ENCODE measurements at regions of chr7 and their contacts with region 1.

Region 1: DNA sequence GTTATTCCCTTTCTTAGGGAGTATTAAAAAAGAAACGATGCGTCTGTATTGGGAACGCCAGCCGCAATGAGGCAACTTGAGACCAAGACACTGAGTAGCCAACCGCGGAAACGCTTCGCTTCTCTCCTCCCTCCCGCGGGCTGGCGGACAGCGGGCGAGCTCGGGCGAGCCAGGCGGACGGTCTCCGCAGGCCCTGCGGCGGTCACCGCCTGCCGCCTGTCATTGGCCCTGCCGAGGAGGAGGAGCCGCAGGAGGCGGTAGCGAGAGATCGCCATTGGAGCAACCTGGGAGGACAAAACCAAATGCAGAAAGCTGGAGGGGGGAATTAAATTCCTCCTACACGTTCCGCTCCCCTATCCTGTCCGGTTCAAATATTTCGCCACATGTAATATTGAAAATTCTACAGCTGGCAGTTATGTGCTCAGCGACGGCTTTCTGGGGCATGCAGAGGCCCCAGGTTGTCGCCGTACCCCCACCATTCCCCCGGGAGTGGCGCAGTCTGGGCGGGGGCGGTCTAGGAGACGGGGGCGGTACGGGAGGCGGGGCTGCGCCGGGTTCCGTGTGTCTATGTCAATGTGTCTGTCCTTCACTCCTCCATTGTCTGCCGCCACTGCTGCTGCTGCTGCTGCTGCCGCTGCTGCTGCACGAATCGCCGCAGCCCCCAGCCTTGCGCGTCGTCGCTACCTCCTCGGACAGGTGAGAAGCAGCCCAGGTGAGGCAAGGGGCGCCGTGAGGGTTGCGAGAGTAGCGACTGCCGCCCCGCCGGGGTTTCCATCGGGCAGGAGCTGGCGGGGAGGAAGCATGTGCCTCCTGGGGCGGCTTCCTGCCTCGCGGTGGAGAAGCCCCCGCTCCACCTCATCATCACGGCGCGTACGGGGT is at the starts of genes ANKMY2 and BZW2:
- DNase-seq: peak; percentile 95
- H3K4me3 Mint-ChIP-seq: peak within 1 kb of the TSS; percentile 99
- H3K27ac Mint-ChIP-seq: peak within 1 kb of the TSS; percentile 98
- H3K4me1 Mint-ChIP-seq: peaks cover 53% of the 10 kb centered on the region
- H3K27me3 Mint-ChIP-seq: no peaks in the 10 kb centered on the region
- total RNA-seq, gene ANKMY2: 7.8 to 8.4 TPM
- total RNA-seq, gene BZW2: 84.2 to 89.8 TPM

Region 2: GRCh38 chr7:16420649-16421332 is 225.0 kb before region 1 on chr7:
- CTCF ChIA-PET with region 1: interaction called, 4 read pairs
- POLR2A ChIA-PET with region 1: interaction called, 24 read pairs
- intact Hi-C with region 1: loop called (anchors 1 kb)
- DNase-seq: peak; percentile 89
- H3K4me3 Mint-ChIP-seq: peak overlapping the region; percentile 89
- H3K27ac Mint-ChIP-seq: peak overlapping the region; percentile 96
- H3K4me1 Mint-ChIP-seq: peaks cover 17% of the 10 kb centered on the region
- H3K27me3 Mint-ChIP-seq: peaks cover 3% of the 10 kb centered on the region

Region 3: GRCh38 chr7:16660702-16661464 is 15.1 kb after region 1 on chr7:
- CTCF ChIA-PET with region 1: no interaction called
- POLR2A ChIA-PET with region 1: no interaction called
- intact Hi-C with region 1: loop called (anchors 2 kb)
- DNase-seq: no peak
- H3K4me3 Mint-ChIP-seq: no peak overlapping the region
- H3K27ac Mint-ChIP-seq: no peak overlapping the region
- H3K4me1 Mint-ChIP-seq: peaks cover 19% of the 10 kb centered on the region
- H3K27me3 Mint-ChIP-seq: no peaks in the 10 kb centered on the region

Region 4: GRCh38 chr7:16753102-16753931 is 107.5 kb after region 1 on chr7 and contains the start of gene TSPAN13:
- CTCF ChIA-PET with region 1: interaction called, 3 read pairs
- POLR2A ChIA-PET with region 1: no interaction called
- intact Hi-C with region 1: loop called (anchors 2 kb)
- DNase-seq: peak; percentile 76
- H3K4me3 Mint-ChIP-seq: peak within 1 kb of the TSS; percentile 60
- H3K27ac Mint-ChIP-seq: no peak within 1 kb of the TSS
- H3K4me1 Mint-ChIP-seq: peaks cover 11% of the 10 kb centered on the region
- H3K27me3 Mint-ChIP-seq: peaks cover 34% of the 10 kb centered on the region
- total RNA-seq, gene TSPAN13: 0.41 to 0.76 TPM

Region 5: GRCh38 chr7:17234398-17235031 is 588.7 kb after region 1 on chr7:
- CTCF ChIA-PET with region 1: no interaction called
- POLR2A ChIA-PET with region 1: no interaction called
- intact Hi-C with region 1: loop called (anchors 10 kb)
- DNase-seq: peak; percentile 83
- H3K4me3 Mint-ChIP-seq: peak overlapping the region; percentile 71
- H3K27ac Mint-ChIP-seq: peak overlapping the region; percentile 89
- H3K4me1 Mint-ChIP-seq: peaks cover 48% of the 10 kb centered on the region
- H3K27me3 Mint-ChIP-seq: no peaks in the 10 kb centered on the region